ENCODE measurements at regions of chr3 and their contacts with region 1.

Region 1: GRCh38 chr3:179347345-179348194 is at the start of gene MFN1:
- DNase-seq: peak; percentile 69 to 91 (median 88)
- ATAC-seq: peak; percentile 99
- H3K4me3 ChIP-seq: peak within 1 kb of the TSS; percentile 99
- H3K4me3 Mint-ChIP-seq: peak within 1 kb of the TSS; percentile 97 to 100 (median 98)
- H3K27ac ChIP-seq: peak within 1 kb of the TSS; percentile 81
- H3K27ac Mint-ChIP-seq: peak within 1 kb of the TSS; percentile 84 to 98 (median 94)
- H3K4me1 ChIP-seq: peaks cover 8 to 13% of the 10 kb centered on the region in 2 donors
- H3K4me1 Mint-ChIP-seq: peaks cover 7 to 39% (median 28%) of the 10 kb centered on the region in 7 donors
- H3K27me3 ChIP-seq: no peaks in the 10 kb centered on the region
- H3K27me3 Mint-ChIP-seq: no peaks in the 10 kb centered on the region
- total RNA-seq, gene MFN1: 32.2 to 58.1 (median 40.3) TPM

Region 2: DNA sequence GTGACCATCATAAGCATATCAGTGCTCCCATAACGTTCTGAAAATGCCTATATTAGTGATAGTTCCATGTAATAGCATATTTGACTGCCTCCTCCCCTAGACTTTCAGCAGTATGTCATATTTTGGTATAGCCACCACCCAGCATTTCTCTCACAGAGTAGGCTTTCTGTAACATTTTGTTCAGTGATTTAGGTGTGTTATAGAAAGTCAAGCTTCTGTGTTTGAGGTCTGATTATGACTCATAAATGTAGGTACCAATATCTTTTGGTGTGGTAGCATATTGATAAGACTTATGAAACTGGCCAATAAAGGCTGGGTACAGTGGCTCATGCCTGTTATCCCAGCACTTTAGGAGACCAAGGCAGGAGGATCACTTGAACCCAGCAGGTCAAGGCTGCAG is 241.7 kb before region 1 on chr3:
- CTCF ChIA-PET with region 1: no interaction called
- POLR2A ChIA-PET with region 1: no interaction called
- intact Hi-C with region 1: loop called in 1 of 2 experiments (anchors 1 kb)
- DNase-seq: no peak
- ATAC-seq: no peak
- H3K4me3 ChIP-seq: no peak overlapping the region
- H3K4me3 Mint-ChIP-seq: no peak overlapping the region
- H3K27ac ChIP-seq: no peak overlapping the region
- H3K27ac Mint-ChIP-seq: peak overlapping the region in 1 of 9 donors; percentile 84
- H3K4me1 ChIP-seq: no peaks in the 10 kb centered on the region
- H3K4me1 Mint-ChIP-seq: peaks cover 0 to 5% (median 3%) of the 10 kb centered on the region in 7 donors
- H3K27me3 ChIP-seq: no peaks in the 10 kb centered on the region
- H3K27me3 Mint-ChIP-seq: peaks cover 0 to 12% (median 5%) of the 10 kb centered on the region in 5 donors

Region 3: DNA sequence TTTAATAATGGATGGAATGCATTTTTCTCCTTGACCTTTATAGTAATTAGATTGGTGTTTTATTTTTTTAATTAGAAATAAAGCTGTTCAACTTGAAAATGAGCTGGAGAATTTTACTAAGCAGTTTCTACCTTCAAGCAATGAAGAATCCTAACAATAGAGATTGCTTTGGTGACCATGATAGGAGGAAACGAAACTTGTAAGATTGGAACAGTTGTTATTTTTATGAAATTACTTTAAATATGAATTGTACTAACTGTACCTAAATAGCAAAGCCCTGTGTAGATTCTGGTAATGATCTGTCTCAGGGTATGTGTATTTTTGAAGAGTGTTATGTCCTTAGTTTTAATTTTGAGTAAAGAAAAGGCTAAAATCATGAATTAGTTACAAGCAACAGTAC is 44.3 kb after region 1 on chr3:
- CTCF ChIA-PET with region 1: no interaction called
- POLR2A ChIA-PET with region 1: no interaction called
- intact Hi-C with region 1: no loop called
- DNase-seq: no peak
- ATAC-seq: no peak
- H3K4me3 ChIP-seq: no peak overlapping the region
- H3K4me3 Mint-ChIP-seq: no peak overlapping the region
- H3K27ac ChIP-seq: no peak overlapping the region
- H3K27ac Mint-ChIP-seq: no peak overlapping the region
- H3K4me1 ChIP-seq: no peaks in the 10 kb centered on the region
- H3K4me1 Mint-ChIP-seq: no peaks in the 10 kb centered on the region
- H3K27me3 ChIP-seq: no peaks in the 10 kb centered on the region
- H3K27me3 Mint-ChIP-seq: no peaks in the 10 kb centered on the region

Region 4: DNA sequence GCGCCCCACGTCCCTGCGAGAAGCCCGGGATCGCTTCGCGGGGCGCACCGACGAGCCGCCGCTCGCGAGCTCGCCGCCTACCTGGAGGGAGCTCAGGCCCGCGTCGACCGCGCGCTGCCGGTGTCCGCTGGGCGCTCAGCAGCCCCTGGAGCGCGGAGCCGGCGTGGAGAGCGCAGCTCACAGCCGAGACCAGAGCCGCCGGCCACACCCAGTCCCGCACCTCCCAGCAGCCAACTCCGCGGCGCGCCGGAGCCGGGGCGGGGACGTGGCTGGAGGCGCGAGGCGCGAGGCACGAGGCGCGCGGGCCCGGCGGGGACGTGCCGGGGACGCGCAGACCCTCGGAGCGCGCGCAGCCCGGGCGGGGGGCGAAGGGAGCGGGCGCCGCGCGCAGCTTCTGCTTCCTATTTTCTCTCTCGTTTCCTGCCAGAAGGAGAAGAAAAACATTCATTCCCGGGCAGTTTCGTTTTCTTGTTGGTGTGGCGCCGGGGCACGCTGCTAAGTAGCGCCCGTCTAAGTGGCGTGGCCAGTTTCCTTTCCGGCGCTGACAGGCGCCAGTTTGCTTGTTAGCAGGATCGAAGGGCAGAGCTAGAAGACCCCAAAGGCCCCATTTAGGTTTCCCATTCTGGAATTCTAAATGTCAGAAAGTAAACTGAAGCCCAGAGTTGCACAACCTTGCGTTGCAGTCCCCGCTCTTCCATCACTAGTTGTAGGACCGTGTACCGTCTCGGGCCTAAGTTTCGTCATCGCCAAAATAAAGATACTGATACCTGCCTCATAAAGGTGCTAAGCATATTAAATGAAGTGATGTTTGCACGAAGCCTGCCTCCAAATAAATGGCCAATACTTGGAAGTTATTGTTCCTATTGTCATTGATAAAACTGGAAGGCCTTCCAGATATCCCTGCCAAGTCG is 104.0 kb after region 1 on chr3 and contains the start of gene GNB4:
- CTCF ChIA-PET with region 1: no interaction called
- POLR2A ChIA-PET with region 1: no interaction called
- intact Hi-C with region 1: loop called in 1 of 2 experiments (anchors 2 kb)
- DNase-seq: peak in 8 of 9 donors; percentile 8 to 72 (median 32)
- ATAC-seq: peak; percentile 91
- H3K4me3 ChIP-seq: peak within 1 kb of the TSS; percentile 39
- H3K4me3 Mint-ChIP-seq: peak within 1 kb of the TSS; percentile 77 to 90 (median 86)
- H3K27ac ChIP-seq: no peak within 1 kb of the TSS
- H3K27ac Mint-ChIP-seq: peak within 1 kb of the TSS in 2 of 9 donors; percentile 62 to 84
- H3K4me1 ChIP-seq: peaks cover 0 to 10% of the 10 kb centered on the region in 2 donors
- H3K4me1 Mint-ChIP-seq: peaks cover 14 to 29% (median 23%) of the 10 kb centered on the region in 7 donors
- H3K27me3 ChIP-seq: peaks cover 4% of the 10 kb centered on the region in 2 donors
- H3K27me3 Mint-ChIP-seq: peaks cover 57 to 87% (median 75%) of the 10 kb centered on the region in 5 donors
- total RNA-seq, gene GNB4: 1.1 to 11.3 (median 2.1) TPM

Region 5: DNA sequence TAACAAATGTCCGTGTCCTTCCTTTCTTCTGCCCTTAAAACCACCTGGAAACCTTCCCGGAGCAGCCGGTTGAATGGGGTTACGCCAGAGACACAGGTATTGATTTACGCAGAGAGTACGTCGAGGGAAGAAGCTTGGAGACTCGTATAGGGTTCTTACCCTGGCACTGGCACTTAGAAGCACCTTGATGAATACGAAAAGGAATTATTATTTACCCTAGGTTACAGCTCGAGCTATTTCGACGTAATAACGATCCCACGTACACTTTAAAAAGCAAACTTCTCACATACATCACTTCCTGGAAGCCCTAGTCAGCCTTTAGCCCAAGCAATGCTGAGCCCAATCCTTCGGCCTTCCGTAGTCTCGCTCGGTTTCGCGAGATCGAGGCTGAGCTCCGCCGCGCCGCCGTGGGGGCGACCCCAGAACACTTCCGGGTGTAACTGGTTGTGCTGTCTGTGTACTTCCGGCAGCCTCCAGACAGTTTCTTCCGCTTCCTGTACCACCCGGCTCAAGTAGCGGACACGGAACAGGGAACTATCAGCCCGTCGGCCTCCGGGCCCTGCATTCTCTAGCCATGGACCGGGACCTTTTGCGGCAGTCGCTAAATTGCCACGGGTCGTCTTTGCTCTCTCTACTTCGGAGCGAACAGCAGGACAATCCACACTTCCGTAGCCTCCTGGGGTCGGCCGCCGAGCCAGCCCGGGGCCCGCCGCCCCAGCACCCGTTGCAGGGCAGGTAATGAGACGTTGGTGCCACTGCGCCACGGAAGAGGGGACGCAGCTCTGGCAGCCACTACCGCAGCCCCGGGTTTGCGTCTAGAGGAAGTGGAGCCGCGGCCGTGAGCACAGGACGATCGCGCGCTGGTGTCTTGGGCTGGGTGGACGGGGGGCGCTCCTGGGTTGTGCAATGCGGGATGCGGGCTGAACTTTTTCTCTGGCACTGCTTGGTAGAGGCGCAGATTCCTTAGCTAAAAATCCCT is 1254.4 kb after region 1 on chr3 and contains the start of gene TTC14:
- CTCF ChIA-PET with region 1: no interaction called
- POLR2A ChIA-PET with region 1: interaction called, 4 read pairs
- intact Hi-C with region 1: loop called (anchors 1 kb)
- DNase-seq: peak; percentile 80 to 94 (median 92)
- ATAC-seq: peak; percentile 94
- H3K4me3 ChIP-seq: peak within 1 kb of the TSS; percentile 92
- H3K4me3 Mint-ChIP-seq: peak within 1 kb of the TSS; percentile 88 to 98 (median 96)
- H3K27ac ChIP-seq: peak within 1 kb of the TSS; percentile 88
- H3K27ac Mint-ChIP-seq: peak within 1 kb of the TSS; percentile 92 to 99 (median 97)
- H3K4me1 ChIP-seq: peaks cover 12% of the 10 kb centered on the region in 2 donors
- H3K4me1 Mint-ChIP-seq: peaks cover 14 to 47% (median 39%) of the 10 kb centered on the region in 7 donors
- H3K27me3 ChIP-seq: no peaks in the 10 kb centered on the region
- H3K27me3 Mint-ChIP-seq: peaks cover 4 to 23% (median 18%) of the 10 kb centered on the region in 5 donors
- total RNA-seq, gene TTC14: 76.5 to 201 (median 103) TPM

Region 6: GRCh38 chr3:180989291-180990163 is 1642.0 kb after region 1 on chr3 and contains the start of gene DNAJC19:
- CTCF ChIA-PET with region 1: no interaction called
- POLR2A ChIA-PET with region 1: no interaction called
- intact Hi-C with region 1: loop called (anchors 1 to 2 kb)
- DNase-seq: peak; percentile 69 to 94 (median 93)
- ATAC-seq: peak; percentile 99
- H3K4me3 ChIP-seq: peak within 1 kb of the TSS; percentile 78
- H3K4me3 Mint-ChIP-seq: peak within 1 kb of the TSS; percentile 91 to 99 (median 97)
- H3K27ac ChIP-seq: peak within 1 kb of the TSS; percentile 80
- H3K27ac Mint-ChIP-seq: peak within 1 kb of the TSS; percentile 90 to 99 (median 96)
- H3K4me1 ChIP-seq: peaks cover 15 to 23% of the 10 kb centered on the region in 2 donors
- H3K4me1 Mint-ChIP-seq: peaks cover 15 to 58% (median 44%) of the 10 kb centered on the region in 7 donors
- H3K27me3 ChIP-seq: no peaks in the 10 kb centered on the region
- H3K27me3 Mint-ChIP-seq: peaks cover 0 to 7% (median 0%) of the 10 kb centered on the region in 5 donors
- total RNA-seq, gene DNAJC19: 20.7 to 74.1 (median 40.2) TPM

Measured in naive thymus-derived CD4-positive, alpha-beta T cell (primary cell).